H1 (cell line): ENCODE measurements at regions of chr6 and their contacts with region 1.

Region 1: DNA sequence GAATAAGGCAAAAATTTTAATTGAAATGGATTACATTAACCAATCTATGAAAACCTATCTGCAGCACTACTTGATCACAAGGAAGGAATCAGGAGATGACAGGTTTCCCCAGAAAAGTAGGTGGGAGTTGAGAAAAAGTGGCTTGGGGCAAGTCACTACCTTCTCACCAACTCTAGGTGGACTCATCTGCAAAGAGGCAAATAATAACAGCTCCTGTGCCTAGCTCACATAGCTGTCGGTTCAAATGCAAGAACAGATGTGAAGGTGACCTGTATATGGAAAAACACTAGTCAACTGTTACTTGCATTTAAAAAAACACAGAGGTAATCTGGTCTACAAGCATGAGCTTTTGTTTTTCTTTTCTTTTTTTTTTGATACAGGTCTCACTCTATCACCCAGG is 67.2 kb downstream of the POPDC3 start:
- DNase-seq: no peak
- H3K4me3 ChIP-seq: no peak overlapping the region
- H3K27ac ChIP-seq: no peak overlapping the region
- H3K4me1 ChIP-seq: no peaks in the 10 kb centered on the region
- H3K27me3 ChIP-seq: no peaks in the 10 kb centered on the region
- CTCF ChIP-seq: peak in 2 of 3 experiments; percentile 26 to 41; a peak in 2 of 4 replicates
- EP300 ChIP-seq: no peak
- POLR2A ChIP-seq: no peak
- RAD21 ChIP-seq: peak; percentile 52 to 66

Region 2: DNA sequence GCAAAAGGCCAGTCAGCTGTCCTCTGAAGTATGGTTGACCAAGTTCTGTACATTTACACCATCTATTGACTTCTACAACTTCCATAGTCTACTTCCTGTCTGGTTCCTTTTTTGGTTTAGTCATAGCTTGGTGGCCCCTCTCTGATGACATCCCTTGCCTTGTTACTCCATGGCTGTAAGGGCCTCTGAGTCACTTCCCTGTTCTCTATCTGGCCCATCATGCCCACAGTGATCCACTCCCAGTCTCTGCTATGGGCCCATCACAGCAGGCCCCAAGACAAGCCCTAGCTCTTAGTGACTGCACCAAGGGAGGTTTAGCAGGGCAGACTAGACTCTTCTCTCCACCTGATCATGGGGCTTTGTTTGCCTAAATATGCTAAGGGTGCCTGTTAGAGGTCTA is 694.5 kb before region 1 on chr6:
- CTCF ChIA-PET with region 1: no interaction called
- POLR2A ChIA-PET with region 1: no interaction called
- DNase-seq: no peak
- H3K4me3 ChIP-seq: no peak overlapping the region
- H3K27ac ChIP-seq: no peak overlapping the region
- H3K4me1 ChIP-seq: no peaks in the 10 kb centered on the region
- H3K27me3 ChIP-seq: no peaks in the 10 kb centered on the region
- CTCF ChIP-seq: no peak
- EP300 ChIP-seq: no peak
- POLR2A ChIP-seq: no peak
- RAD21 ChIP-seq: no peak

Region 3: GRCh38 chr6:105080279-105080678 is 32.3 kb before region 1 on chr6:
- CTCF ChIA-PET with region 1: no interaction called
- POLR2A ChIA-PET with region 1: no interaction called
- DNase-seq: no peak
- H3K4me3 ChIP-seq: no peak overlapping the region
- H3K27ac ChIP-seq: no peak overlapping the region
- H3K4me1 ChIP-seq: no peaks in the 10 kb centered on the region
- H3K27me3 ChIP-seq: no peaks in the 10 kb centered on the region
- CTCF ChIP-seq: no peak
- EP300 ChIP-seq: no peak
- POLR2A ChIP-seq: no peak
- RAD21 ChIP-seq: no peak

Region 4: GRCh38 chr6:105097288-105097687 is 15.3 kb before region 1 on chr6:
- CTCF ChIA-PET with region 1: interaction called, 13 read pairs
- POLR2A ChIA-PET with region 1: interaction called, 3 read pairs
- DNase-seq: no peak
- H3K4me3 ChIP-seq: no peak overlapping the region
- H3K27ac ChIP-seq: no peak overlapping the region
- H3K4me1 ChIP-seq: no peaks in the 10 kb centered on the region
- H3K27me3 ChIP-seq: no peaks in the 10 kb centered on the region
- CTCF ChIP-seq: no peak
- EP300 ChIP-seq: no peak
- POLR2A ChIP-seq: no peak
- RAD21 ChIP-seq: no peak